GM18951 (cell line): ENCODE measurements at regions of chr21 and their contacts with region 1.

Region 1: GRCh38 chr21:41828481-41829360 is 50.4 kb downstream of the PRDM15 start:
- POLR2A ChIP-seq: no peak

Region 2: GRCh38 chr21:42117229-42117966 is 288.7 kb after region 1 on chr21:
- in situ Hi-C with region 1: loop called (anchors 10 kb)
- POLR2A ChIP-seq: no peak